Gastrocnemius medialis (tissue), 4 donors: ENCODE measurements at regions of chr1 and their contacts with region 1.

Region 1: GRCh38 chr1:15272009-15272788 is 25.2 kb downstream of the FHAD1 start:
- DNase-seq: peak in 1 of 2 donors; percentile 5
- ATAC-seq: no peak
- H3K4me3 ChIP-seq: no peak overlapping the region
- H3K27ac ChIP-seq: no peak overlapping the region
- H3K4me1 ChIP-seq: no peaks in the 10 kb centered on the region
- H3K27me3 ChIP-seq: peaks cover 0 to 6% (median 3%) of the 10 kb centered on the region in 3 donors
- CTCF ChIP-seq: peak; percentile 12 to 53 (median 41)
- POLR2A ChIP-seq: no peak

Region 2: DNA sequence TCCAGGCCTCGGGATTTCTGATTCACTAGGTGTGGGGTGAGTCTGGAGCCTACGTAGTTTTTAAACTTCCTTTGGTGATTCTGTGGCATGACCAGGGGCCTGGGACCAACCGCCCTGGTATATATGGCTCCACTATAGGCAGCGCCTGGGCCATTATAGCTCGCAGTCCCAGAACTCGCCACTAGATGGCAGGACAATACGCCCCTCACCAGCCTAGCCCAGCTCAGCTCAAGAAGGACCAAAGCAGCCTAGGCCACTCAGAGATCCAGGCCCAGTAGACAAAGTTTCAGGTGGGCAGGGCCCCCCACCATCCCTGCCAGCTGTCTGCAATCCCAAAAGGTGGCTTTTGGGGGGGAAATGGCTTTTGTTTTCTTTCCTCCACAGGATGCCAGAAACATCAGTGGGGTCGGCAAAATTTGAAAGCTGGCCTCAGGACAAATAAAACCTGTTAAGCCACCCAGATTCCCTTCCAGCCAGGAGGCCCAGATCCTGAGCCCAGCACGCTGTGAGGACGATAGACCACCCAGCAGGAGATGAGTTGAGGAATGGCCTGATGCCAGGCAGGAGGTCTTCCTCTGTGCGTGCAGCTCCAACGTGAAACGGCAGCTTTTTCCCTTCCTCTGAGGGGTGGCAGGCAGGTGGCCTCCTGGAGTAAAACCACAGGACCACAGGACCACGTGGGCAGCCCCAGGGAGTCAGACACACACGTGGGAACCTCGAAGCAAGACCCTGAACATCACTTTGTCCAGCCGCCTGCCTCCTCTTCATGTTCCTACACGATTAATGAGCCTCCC is 143.5 kb before region 1 on chr1:
- in situ Hi-C with region 1: no loop called
- intact Hi-C with region 1: loop called (anchors 10 kb)
- DNase-seq: peak; percentile 11 to 17
- ATAC-seq: peak in 1 of 2 donors; percentile 53
- H3K4me3 ChIP-seq: no peak overlapping the region
- H3K27ac ChIP-seq: no peak overlapping the region
- H3K4me1 ChIP-seq: no peaks in the 10 kb centered on the region
- H3K27me3 ChIP-seq: no peaks in the 10 kb centered on the region
- CTCF ChIP-seq: peak; percentile 19 to 73 (median 58)
- POLR2A ChIP-seq: no peak

Region 3: GRCh38 chr1:15152318-15153183 is 119.6 kb before region 1 on chr1:
- in situ Hi-C with region 1: loop called in 2 of 4 experiments (anchors 5 to 10 kb)
- intact Hi-C with region 1: loop called (anchors 2 kb)
- DNase-seq: peak; percentile 21 to 31
- ATAC-seq: peak in 1 of 2 donors; percentile 30
- H3K4me3 ChIP-seq: peak overlapping the region; percentile 56 to 60 (median 58)
- H3K27ac ChIP-seq: peak overlapping the region; percentile 33 to 51 (median 40)
- H3K4me1 ChIP-seq: peaks cover 0 to 14% of the 10 kb centered on the region in 2 donors
- H3K27me3 ChIP-seq: peaks cover 7 to 29% (median 22%) of the 10 kb centered on the region in 3 donors
- CTCF ChIP-seq: peak in 4 of 5 experiments; percentile 22 to 49 (median 36)
- POLR2A ChIP-seq: peak in 1 of 2 donors; percentile 35